ENCODE measurements at regions of chr20 and their contacts with region 1.

Region 1: GRCh38 chr20:62793912-62794724 is 2.2 kb upstream of the MRGBP start:
- DNase-seq: peak; percentile 99
- ATAC-seq: peak; percentile 83
- H3K4me3 Mint-ChIP-seq: peak overlapping the region; percentile 82
- H3K27ac Mint-ChIP-seq: peak overlapping the region; percentile 92
- H3K4me1 Mint-ChIP-seq: peaks cover 44% of the 10 kb centered on the region
- H3K27me3 Mint-ChIP-seq: no peaks in the 10 kb centered on the region
- CTCF ChIP-seq: no peak

Region 2: DNA sequence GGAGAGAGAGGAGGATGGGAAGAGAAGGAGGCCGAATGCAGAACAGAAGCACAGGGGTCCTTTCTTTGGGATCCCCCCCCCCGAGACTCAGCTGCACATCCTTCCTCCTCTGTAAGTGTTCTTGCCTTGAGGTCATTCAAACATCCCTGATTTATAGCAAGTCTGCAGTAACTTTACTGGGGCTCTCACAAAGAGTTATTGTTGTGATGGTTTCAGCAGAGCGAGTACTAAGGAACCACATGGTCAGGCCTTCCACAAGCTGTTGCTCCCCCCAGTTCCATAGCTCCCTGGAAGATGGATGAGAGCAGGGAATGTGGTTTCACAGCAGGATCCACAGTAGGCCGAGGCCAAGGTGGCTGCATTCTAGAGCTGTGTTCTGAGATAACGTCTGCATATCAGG is 1893.5 kb before region 1 on chr20:
- CTCF ChIA-PET with region 1: no interaction called
- POLR2A ChIA-PET with region 1: no interaction called
- intact Hi-C with region 1: no loop called
- DNase-seq: no peak
- ATAC-seq: no peak
- H3K4me3 Mint-ChIP-seq: no peak overlapping the region
- H3K27ac Mint-ChIP-seq: no peak overlapping the region
- H3K4me1 Mint-ChIP-seq: no peaks in the 10 kb centered on the region
- H3K27me3 Mint-ChIP-seq: no peaks in the 10 kb centered on the region
- CTCF ChIP-seq: no peak

Region 3: GRCh38 chr20:62121776-62122631 is 672.1 kb before region 1 on chr20 and contains the start of gene LSM14B:
- CTCF ChIA-PET with region 1: no interaction called
- POLR2A ChIA-PET with region 1: interaction called, 8 read pairs
- intact Hi-C with region 1: loop called (anchors 5 kb)
- DNase-seq: peak; percentile 95
- ATAC-seq: peak; percentile 87
- H3K4me3 Mint-ChIP-seq: peak within 1 kb of the TSS; percentile 88
- H3K27ac Mint-ChIP-seq: peak within 1 kb of the TSS; percentile 89
- H3K4me1 Mint-ChIP-seq: peaks cover 19% of the 10 kb centered on the region
- H3K27me3 Mint-ChIP-seq: no peaks in the 10 kb centered on the region
- CTCF ChIP-seq: no peak
- total RNA-seq, gene LSM14B: 35.4 and 36.4 TPM in 2 replicates

Region 4: DNA sequence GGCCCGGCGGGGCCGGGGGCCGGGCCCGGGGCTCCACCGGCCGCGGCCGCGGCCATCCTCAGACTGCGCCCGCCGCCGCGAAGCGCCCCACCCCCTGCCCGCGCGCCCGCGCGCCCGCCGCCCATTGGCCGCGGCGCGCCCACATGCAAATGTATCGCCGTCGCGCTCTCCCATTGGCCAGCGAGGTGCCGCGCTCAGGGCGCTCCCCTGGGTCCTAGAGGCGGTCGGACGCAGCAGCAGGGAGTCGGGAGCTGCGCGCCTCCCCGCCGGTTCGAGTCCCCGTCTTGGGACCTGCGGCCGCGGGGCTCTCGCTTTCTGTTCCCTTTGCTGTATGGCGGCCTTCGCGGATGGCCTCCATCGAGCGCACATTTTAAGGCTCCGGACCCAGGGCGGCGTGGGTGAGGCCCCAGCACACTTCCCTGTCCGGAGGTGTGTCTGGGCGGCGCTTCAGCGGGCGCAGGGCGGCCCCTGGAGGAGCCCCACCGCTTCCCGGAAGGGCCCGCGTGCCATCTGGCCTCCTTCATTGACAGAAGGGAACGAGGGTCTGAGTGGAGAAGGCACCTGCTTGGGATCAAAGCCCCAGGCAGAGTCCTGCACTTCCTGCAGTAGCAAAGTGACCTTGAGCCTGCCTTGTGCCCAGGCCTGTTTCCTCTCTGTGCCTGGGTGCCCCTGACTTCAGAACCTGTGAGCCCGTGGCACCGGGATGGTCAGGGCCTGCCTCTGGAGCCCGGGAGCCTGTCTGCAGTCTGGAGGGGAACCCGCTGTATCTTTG is 386.7 kb before region 1 on chr20 and contains the start of gene CABLES2:
- CTCF ChIA-PET with region 1: interaction called, 6 read pairs
- POLR2A ChIA-PET with region 1: interaction called, 3 read pairs
- intact Hi-C with region 1: loop called (anchors 1 kb)
- DNase-seq: peak; percentile 90
- ATAC-seq: peak; percentile 90
- H3K4me3 Mint-ChIP-seq: peak within 1 kb of the TSS; percentile 88
- H3K27ac Mint-ChIP-seq: peak within 1 kb of the TSS; percentile 86
- H3K4me1 Mint-ChIP-seq: peaks cover 36% of the 10 kb centered on the region
- H3K27me3 Mint-ChIP-seq: no peaks in the 10 kb centered on the region
- CTCF ChIP-seq: no peak
- total RNA-seq, gene CABLES2: 6.6 and 7.0 TPM in 2 replicates

Region 5: DNA sequence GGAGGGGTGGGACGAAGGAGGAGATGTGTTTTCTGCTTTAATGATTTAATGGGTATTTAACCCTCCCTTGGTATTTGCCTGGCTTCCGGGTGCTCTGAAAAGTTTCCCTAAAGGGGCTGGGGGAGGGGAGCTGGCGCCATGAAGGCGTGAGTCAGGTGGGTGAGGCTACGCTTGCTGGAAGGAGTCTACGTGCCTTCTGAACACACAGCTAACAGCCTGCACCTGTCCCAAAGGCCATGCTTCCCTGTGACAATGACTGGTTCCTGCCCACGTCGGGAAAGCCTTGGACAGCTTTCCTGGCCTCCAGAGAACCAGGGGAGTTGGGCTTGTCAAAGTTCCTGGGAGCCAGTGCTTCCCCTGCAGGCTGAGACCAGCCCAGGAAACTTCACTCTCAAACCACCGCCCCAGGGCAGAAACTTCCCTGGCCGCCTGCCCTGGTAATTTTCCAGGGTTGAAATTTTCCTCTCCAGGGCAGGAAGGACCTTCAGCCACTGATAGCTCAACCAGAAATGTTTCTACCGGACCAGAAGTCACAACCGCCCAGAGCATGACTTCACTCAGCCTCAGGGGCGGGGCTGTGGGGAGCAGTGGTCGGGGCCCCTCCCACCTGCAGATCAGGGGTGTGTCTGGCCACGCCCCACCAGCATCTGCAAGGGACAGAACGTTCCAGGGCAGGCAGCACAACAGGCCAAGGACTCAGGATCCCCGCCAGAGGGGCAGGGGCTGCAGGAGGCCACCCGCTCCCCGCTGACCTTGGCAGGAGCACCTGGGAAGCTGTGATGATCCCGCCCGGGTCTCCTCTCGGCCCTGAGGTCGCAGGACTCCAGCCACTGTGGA is 170.4 kb before region 1 on chr20:
- CTCF ChIA-PET with region 1: interaction called, 9 read pairs
- POLR2A ChIA-PET with region 1: interaction called, 48 read pairs
- intact Hi-C with region 1: loop called (anchors 1 kb)
- DNase-seq: peak; percentile 82
- ATAC-seq: peak; percentile 87
- H3K4me3 Mint-ChIP-seq: peak overlapping the region; percentile 80
- H3K27ac Mint-ChIP-seq: peak overlapping the region; percentile 98
- H3K4me1 Mint-ChIP-seq: peaks cover 43% of the 10 kb centered on the region
- H3K27me3 Mint-ChIP-seq: no peaks in the 10 kb centered on the region
- CTCF ChIP-seq: no peak

Region 6: DNA sequence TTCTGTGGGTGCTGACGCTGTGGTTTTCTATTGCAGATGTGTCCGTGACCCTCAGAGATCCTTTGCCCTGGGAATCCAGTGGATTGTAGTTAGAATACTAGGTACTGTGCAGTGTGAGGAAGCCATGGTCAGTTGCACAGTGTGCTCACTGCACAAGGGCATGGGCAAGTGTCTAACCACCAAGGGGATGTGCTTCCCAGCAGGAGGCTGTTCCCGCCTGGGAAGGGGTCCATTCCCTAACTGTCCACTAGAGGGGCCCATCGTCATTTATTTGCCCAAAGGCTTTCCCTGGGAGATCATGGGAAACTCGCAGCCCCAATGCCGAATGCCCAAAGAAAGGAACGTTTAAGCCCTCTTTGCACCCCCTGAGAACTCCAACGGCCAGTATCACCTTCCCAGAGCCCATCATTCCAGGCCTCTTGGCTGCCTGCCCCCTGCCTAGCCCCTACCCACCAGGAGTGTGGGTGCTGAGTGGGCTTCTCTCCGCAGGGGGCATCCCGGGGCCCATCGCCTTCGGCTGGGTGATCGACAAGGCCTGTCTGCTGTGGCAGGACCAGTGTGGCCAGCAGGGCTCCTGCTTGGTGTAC is 125.6 kb before region 1 on chr20:
- CTCF ChIA-PET with region 1: no interaction called
- POLR2A ChIA-PET with region 1: no interaction called
- intact Hi-C with region 1: loop called (anchors 1 kb)
- DNase-seq: no peak
- ATAC-seq: peak; percentile 45
- H3K4me3 Mint-ChIP-seq: no peak overlapping the region
- H3K27ac Mint-ChIP-seq: no peak overlapping the region
- H3K4me1 Mint-ChIP-seq: no peaks in the 10 kb centered on the region
- H3K27me3 Mint-ChIP-seq: no peaks in the 10 kb centered on the region
- CTCF ChIP-seq: no peak

Region 7: GRCh38 chr20:62760856-62761758 is 33.0 kb before region 1 on chr20:
- CTCF ChIA-PET with region 1: no interaction called
- POLR2A ChIA-PET with region 1: no interaction called
- intact Hi-C with region 1: no loop called
- DNase-seq: no peak
- ATAC-seq: no peak
- H3K4me3 Mint-ChIP-seq: no peak overlapping the region
- H3K27ac Mint-ChIP-seq: no peak overlapping the region
- H3K4me1 Mint-ChIP-seq: no peaks in the 10 kb centered on the region
- H3K27me3 Mint-ChIP-seq: peaks cover 19% of the 10 kb centered on the region
- CTCF ChIP-seq: no peak

Region 8: GRCh38 chr20:62808211-62808865 is 14.2 kb after region 1 on chr20:
- CTCF ChIA-PET with region 1: interaction called, 6 read pairs
- POLR2A ChIA-PET with region 1: interaction called, 56 read pairs
- intact Hi-C with region 1: loop called (anchors 1 kb)
- DNase-seq: peak; percentile 75
- ATAC-seq: peak; percentile 56
- H3K4me3 Mint-ChIP-seq: peak overlapping the region; percentile 48
- H3K27ac Mint-ChIP-seq: peak overlapping the region; percentile 69
- H3K4me1 Mint-ChIP-seq: peaks cover 31% of the 10 kb centered on the region
- H3K27me3 Mint-ChIP-seq: no peaks in the 10 kb centered on the region
- CTCF ChIP-seq: peak; percentile 48

Measured in activated B cell treated with CpG ODN at 0.5 μM for 24 hours (primary cell).